H1 (cell line): ENCODE measurements at regions of chr17 and their contacts with region 1.

Region 1: GRCh38 chr17:53032861-53033271 is 789.9 kb upstream of the KIF2B start:
- DNase-seq: peak; percentile 62 to 66
- H3K4me3 ChIP-seq: no peak overlapping the region
- H3K27ac ChIP-seq: no peak overlapping the region
- H3K4me1 ChIP-seq: peaks cover 0 to 7% (median 3%) of the 10 kb centered on the region in 4 experiments; a peak in 4 of 7 replicates
- H3K27me3 ChIP-seq: no peaks in the 10 kb centered on the region; a peak in 1 of 7 replicates
- CTCF ChIP-seq: peak in 2 of 3 experiments; percentile 82 to 94; a peak in 3 of 4 replicates
- EP300 ChIP-seq: no peak
- POLR2A ChIP-seq: no peak
- RAD21 ChIP-seq: peak; percentile 97 to 100

Region 2: DNA sequence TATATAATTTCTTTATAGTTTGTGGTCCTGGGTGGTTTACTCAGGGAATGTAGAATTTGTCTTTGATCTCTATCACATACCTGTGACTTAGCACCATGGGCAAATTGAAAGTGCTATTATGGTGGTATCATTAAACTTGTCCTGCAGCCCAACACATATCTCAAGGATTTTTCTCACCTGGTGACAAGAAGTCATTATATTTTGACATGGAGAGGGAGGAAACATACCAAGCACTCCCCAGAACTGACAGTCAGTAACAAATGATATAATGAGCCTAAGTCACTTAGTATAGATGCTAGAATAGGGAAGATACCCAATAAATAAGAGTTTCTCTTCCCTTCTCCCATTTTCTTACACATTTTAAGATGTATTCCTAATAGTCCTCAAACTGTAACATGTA is 15.6 kb before region 1 on chr17:
- CTCF ChIA-PET with region 1: no interaction called
- POLR2A ChIA-PET with region 1: no interaction called
- DNase-seq: no peak
- H3K4me3 ChIP-seq: no peak overlapping the region
- H3K27ac ChIP-seq: no peak overlapping the region
- H3K4me1 ChIP-seq: no peaks in the 10 kb centered on the region
- H3K27me3 ChIP-seq: no peaks in the 10 kb centered on the region
- CTCF ChIP-seq: no peak
- EP300 ChIP-seq: no peak
- POLR2A ChIP-seq: no peak
- RAD21 ChIP-seq: no peak

Region 3: GRCh38 chr17:53100126-53100525 is 67.3 kb after region 1 on chr17:
- CTCF ChIA-PET with region 1: no interaction called
- POLR2A ChIA-PET with region 1: no interaction called
- DNase-seq: no peak
- H3K4me3 ChIP-seq: no peak overlapping the region
- H3K27ac ChIP-seq: no peak overlapping the region
- H3K4me1 ChIP-seq: no peaks in the 10 kb centered on the region
- H3K27me3 ChIP-seq: no peaks in the 10 kb centered on the region
- CTCF ChIP-seq: no peak
- EP300 ChIP-seq: no peak
- POLR2A ChIP-seq: no peak
- RAD21 ChIP-seq: no peak

Region 4: DNA sequence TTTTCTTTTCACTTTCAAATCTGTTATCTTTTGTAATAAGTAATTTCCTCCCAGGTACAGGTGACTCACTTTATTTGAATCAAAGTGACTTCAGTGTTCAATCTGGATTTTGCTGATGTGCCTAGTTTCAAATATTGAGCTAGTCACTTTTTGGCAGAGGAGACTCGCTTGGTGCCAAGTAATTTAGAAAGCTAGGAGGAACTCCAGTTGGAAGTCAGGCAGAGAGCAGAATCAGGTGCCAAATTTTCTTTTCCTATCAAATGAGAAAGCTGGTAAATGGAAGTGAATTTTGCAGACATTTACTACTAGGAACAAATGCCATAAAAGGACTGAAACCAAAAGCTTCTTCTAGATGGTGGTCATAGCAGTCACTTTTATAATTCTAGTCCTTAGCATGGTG is 133.9 kb after region 1 on chr17:
- CTCF ChIA-PET with region 1: no interaction called
- POLR2A ChIA-PET with region 1: no interaction called
- DNase-seq: no peak
- H3K4me3 ChIP-seq: no peak overlapping the region
- H3K27ac ChIP-seq: no peak overlapping the region
- H3K4me1 ChIP-seq: no peaks in the 10 kb centered on the region
- H3K27me3 ChIP-seq: no peaks in the 10 kb centered on the region
- CTCF ChIP-seq: no peak
- EP300 ChIP-seq: no peak
- POLR2A ChIP-seq: no peak
- RAD21 ChIP-seq: no peak

Region 5: DNA sequence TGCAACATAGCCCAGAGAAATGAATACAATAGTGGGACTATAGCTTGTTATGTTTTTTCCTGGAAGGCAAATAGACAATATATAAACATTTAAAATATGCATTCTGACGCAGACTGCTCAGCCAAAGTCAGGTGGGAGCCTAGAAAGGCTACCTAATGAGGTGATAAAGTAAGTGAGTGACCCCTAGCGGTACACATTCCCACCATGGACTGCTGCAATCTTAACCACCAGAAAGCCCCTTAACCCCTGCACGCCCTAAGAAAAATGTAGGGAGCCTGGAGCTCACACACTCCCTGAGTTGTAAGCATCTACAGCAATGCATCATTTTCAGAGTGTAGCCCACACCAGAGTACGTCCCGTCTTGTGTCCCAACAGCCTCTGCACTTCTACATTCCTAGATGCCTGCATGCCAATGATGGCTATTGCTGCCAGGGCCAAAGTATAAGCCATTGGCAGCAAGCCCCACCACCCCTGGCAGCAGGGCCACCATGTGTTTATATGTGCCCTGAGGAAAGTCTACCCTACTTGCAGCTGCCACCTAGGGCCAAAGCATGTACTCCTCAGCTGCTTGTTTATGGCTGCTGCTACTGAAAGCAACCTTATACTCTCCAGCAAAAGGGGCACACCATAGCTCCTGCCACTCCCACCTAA is 917.5 kb after region 1 on chr17:
- CTCF ChIA-PET with region 1: interaction called, 13 read pairs
- POLR2A ChIA-PET with region 1: no interaction called
- DNase-seq: peak; percentile 7 to 55
- H3K4me3 ChIP-seq: no peak overlapping the region
- H3K27ac ChIP-seq: no peak overlapping the region
- H3K4me1 ChIP-seq: peaks cover 0 to 4% (median 1%) of the 10 kb centered on the region in 4 experiments; a peak in 2 of 7 replicates
- H3K27me3 ChIP-seq: no peaks in the 10 kb centered on the region
- CTCF ChIP-seq: peak; percentile 41 to 72 (median 56)
- EP300 ChIP-seq: no peak
- POLR2A ChIP-seq: no peak
- RAD21 ChIP-seq: peak; percentile 81 to 85